HEK293 (cell line): ENCODE measurements at regions of chr15 and their contacts with region 1.

Region 1: DNA sequence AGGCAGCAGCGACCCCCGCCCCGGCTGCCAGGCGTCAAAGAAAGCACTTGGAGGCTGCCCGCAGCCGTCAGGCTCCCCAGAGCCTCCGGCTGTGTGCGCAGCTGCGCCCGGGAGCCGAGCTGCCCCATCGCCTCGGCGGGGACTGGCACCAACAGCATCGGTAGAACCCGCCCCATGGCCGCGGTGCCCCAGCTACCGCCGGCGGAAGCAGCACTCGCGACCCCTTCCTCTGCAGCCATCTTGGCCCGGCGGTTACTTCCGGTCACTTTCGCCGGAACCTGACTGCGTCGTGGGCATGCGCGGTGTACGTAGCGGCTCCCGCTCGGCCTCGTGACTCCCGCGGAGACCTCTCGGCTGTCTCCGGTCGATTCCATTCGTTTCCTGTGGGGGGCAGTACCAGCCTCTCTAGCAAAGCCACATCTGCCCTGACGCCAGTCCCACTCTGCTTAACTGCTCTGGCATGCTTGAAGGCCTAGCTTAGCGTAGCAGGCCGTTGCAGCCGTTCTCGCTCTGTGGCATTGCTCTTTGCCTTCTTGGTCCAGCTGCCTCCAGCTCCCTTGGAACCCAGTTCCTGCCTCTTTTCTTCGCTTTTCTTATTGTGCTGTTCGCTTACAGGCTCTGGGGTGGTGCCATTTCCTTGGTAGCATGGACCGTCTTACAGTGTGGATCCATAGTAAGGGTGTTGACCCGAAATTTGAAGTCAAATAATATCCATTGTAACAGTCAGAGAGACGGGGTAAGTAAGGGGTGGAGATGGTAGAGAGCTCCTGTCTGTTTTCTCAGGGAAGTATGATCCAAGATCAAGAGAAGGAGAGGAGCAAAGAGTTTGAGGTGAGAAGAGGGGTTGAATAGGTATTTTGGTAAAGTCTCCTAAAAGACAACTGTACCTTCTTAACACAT is at the start of gene SPG11:
- H3K4me3 ChIP-seq: peak within 1 kb of the TSS; percentile 93
- H3K27ac ChIP-seq: peak within 1 kb of the TSS; percentile 63; the same call in 1 of the 2 replicates
- H3K4me1 ChIP-seq: no peaks in the 10 kb centered on the region
- CTCF ChIP-seq: peak; percentile 97

Region 2: DNA sequence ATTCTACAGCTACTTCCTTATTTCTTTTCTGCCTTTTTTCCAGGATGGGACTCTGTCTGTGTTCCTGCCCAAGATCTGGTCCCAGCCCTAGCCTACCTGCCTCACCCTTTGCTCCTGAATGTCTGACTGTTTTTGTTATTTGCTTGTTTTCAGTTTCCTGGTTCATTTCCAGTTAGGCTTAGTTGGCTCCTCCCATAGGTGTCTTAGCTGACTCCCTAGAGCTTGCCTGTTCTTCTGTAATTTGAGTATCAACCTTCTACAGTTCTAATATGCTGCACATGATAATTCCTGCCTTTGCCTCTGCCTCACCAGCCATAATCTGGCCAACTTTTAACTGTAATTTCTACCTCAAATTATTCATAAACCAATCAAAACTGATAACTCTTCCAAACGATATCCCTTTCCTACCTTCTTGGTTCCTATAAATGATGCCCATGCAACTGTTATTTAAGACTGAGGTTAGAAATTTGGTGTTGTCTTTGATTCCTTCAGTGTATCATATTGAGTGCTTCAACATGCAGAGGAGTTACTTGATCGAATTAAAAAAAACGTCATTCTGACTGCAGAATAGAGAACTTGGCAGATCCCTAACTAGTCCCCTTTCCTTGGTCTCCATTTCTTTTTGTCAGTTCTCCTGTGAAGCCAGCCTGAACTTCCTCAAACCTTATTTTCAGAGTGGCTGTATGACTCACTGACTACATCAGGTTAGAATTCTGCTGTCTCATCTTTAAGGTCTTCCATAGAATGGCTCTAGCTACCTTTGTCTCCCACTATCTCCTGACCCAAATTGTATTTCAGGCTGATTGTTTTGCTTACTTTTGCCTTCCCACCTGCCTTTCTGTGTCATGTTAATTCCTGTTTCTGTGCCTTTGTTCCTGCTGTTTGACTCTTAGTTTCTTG is 366.8 kb before region 1 on chr15:
- CTCF ChIA-PET with region 1: no interaction called
- POLR2A ChIA-PET with region 1: no interaction called
- H3K4me3 ChIP-seq: no peak overlapping the region
- H3K27ac ChIP-seq: no peak overlapping the region
- H3K4me1 ChIP-seq: no peaks in the 10 kb centered on the region; the same call in 1 of the 2 replicates
- CTCF ChIP-seq: no peak

Region 3: GRCh38 chr15:44598892-44599291 is 64.8 kb before region 1 on chr15:
- CTCF ChIA-PET with region 1: no interaction called
- POLR2A ChIA-PET with region 1: no interaction called
- H3K4me3 ChIP-seq: no peak overlapping the region
- H3K27ac ChIP-seq: no peak overlapping the region
- H3K4me1 ChIP-seq: no peaks in the 10 kb centered on the region
- CTCF ChIP-seq: no peak

Region 4: GRCh38 chr15:44633603-44634002 is 30.1 kb before region 1 on chr15:
- CTCF ChIA-PET with region 1: no interaction called
- POLR2A ChIA-PET with region 1: no interaction called
- H3K4me3 ChIP-seq: no peak overlapping the region
- H3K27ac ChIP-seq: no peak overlapping the region
- H3K4me1 ChIP-seq: no peaks in the 10 kb centered on the region
- CTCF ChIP-seq: no peak

Region 5: GRCh38 chr15:44728576-44729407 is 65.1 kb after region 1 on chr15:
- CTCF ChIA-PET with region 1: interaction called, 10 read pairs
- POLR2A ChIA-PET with region 1: interaction called, 21 read pairs
- H3K4me3 ChIP-seq: peak overlapping the region; percentile 69
- H3K27ac ChIP-seq: peak overlapping the region; percentile 85
- H3K4me1 ChIP-seq: peaks cover 7% of the 10 kb centered on the region; the same call in 1 of the 2 replicates
- CTCF ChIP-seq: no peak